HepG2 (cell line): ENCODE measurements at regions of chr6 and their contacts with region 1.

Region 1: DNA sequence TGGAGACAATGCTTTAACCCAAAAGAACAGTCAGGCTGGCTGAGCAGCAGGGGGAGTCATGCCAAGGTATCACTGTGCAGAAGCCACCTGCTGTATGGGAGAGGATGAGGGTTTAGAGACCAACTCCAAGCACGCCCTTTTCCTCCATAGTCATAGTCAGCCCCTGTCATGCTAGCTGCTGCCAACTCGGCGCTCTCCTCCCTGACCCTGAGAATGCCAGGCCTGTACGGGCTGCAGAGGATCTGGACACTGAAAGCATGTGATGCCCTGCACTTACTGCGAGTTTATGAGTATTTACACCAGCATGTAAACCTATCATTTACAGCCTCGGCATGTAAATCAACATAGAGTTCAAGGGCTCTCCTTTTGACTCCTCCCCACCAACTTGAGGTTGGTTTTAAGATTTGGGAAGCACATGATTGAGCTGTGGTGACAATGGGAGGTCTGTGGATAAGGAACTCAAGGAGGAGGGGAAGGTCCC is 11.7 kb upstream of the SCUBE3 start:
- DNase-seq: no peak
- ATAC-seq: peak; percentile 58
- H3K4me3 ChIP-seq: no peak overlapping the region
- H3K27ac ChIP-seq: no peak overlapping the region
- H3K4me1 ChIP-seq: peaks cover 43% of the 10 kb centered on the region
- H3K27me3 ChIP-seq: peaks cover 7 to 26% of the 10 kb centered on the region in 2 experiments; a peak in 4 of 5 replicates
- CTCF ChIP-seq: no peak
- EP300 ChIP-seq: no peak
- POLR2A ChIP-seq: no peak
- RAD21 ChIP-seq: no peak

Region 2: DNA sequence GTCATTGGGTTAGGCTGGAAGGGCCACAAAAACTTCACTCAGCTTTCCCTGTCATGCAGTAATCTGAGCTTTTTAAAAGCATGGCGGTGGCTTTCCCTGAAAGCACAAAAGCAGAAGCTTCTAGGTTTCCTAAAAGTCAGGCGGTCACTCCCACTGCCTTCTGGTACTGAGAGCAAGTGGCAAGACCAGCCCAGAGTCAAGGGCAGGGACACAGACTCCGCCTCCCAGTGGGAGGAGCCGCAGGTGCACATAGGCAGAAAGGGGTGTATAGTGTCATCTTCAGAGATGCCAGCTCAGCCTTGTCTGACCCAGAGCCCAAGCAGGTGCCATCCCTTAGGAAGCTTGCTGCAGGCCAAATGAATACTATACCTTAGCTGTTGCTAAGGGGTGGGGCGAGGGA is 754.2 kb before region 1 on chr6:
- CTCF ChIA-PET with region 1: no interaction called
- POLR2A ChIA-PET with region 1: no interaction called
- in situ Hi-C with region 1: no loop called
- intact Hi-C with region 1: no loop called
- DNase-seq: no peak
- ATAC-seq: peak; percentile 60
- H3K4me3 ChIP-seq: no peak overlapping the region
- H3K27ac ChIP-seq: no peak overlapping the region
- H3K4me1 ChIP-seq: no peaks in the 10 kb centered on the region
- H3K27me3 ChIP-seq: peaks cover 1 to 14% of the 10 kb centered on the region in 2 experiments; a peak in 2 of 5 replicates
- CTCF ChIP-seq: no peak
- EP300 ChIP-seq: no peak
- POLR2A ChIP-seq: no peak
- RAD21 ChIP-seq: no peak

Region 3: GRCh38 chr6:34986845-34987246 is 215.3 kb before region 1 on chr6:
- CTCF ChIA-PET with region 1: no interaction called
- POLR2A ChIA-PET with region 1: no interaction called
- in situ Hi-C with region 1: no loop called
- intact Hi-C with region 1: loop called (anchors 2 kb)
- DNase-seq: peak; percentile 71
- ATAC-seq: peak; percentile 76
- H3K4me3 ChIP-seq: no peak overlapping the region
- H3K27ac ChIP-seq: no peak overlapping the region
- H3K4me1 ChIP-seq: no peaks in the 10 kb centered on the region
- H3K27me3 ChIP-seq: no peaks in the 10 kb centered on the region
- CTCF ChIP-seq: peak; percentile 89
- EP300 ChIP-seq: no peak
- POLR2A ChIP-seq: no peak
- RAD21 ChIP-seq: peak; percentile 80

Region 4: DNA sequence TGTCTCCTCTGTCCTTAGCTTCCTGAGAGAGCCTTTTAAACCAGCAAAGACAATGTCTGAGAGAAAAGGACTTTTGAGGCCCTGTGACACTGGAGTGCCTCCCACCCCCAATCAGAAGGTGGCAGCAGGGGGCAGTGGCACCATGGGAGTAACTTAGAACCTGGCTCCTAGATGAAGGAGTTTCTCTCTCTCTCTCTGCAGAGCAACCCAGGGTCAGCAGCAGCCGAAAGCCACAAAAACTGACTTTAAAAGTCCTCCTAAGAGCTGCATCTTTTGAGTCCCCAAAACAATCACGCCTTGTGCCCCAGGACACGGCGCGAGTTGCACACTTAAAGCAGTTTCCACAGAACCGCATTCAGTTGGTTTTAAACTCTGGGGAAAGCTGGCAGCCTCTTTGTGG is 55.7 kb before region 1 on chr6:
- CTCF ChIA-PET with region 1: interaction called, 67 read pairs
- POLR2A ChIA-PET with region 1: interaction called, 4 read pairs
- in situ Hi-C with region 1: loop called (anchors 5 kb)
- intact Hi-C with region 1: loop called (anchors 1 kb)
- DNase-seq: peak; percentile 63
- ATAC-seq: peak; percentile 92
- H3K4me3 ChIP-seq: no peak overlapping the region
- H3K27ac ChIP-seq: no peak overlapping the region
- H3K4me1 ChIP-seq: peaks cover 19% of the 10 kb centered on the region
- H3K27me3 ChIP-seq: peaks cover 0 to 19% of the 10 kb centered on the region in 2 experiments; a peak in 3 of 5 replicates
- CTCF ChIP-seq: peak; percentile 93
- EP300 ChIP-seq: no peak
- POLR2A ChIP-seq: no peak
- RAD21 ChIP-seq: peak; percentile 92

Region 5: GRCh38 chr6:35185302-35185681 is 16.8 kb before region 1 on chr6:
- CTCF ChIA-PET with region 1: no interaction called
- POLR2A ChIA-PET with region 1: interaction called, 3 read pairs
- in situ Hi-C with region 1: no loop called
- intact Hi-C with region 1: loop called (anchors 2 kb)
- DNase-seq: peak; percentile 82
- ATAC-seq: peak; percentile 94
- H3K4me3 ChIP-seq: peak overlapping the region in 2 of 3 experiments; percentile 11 to 21; a peak in 1 of 6 replicates
- H3K27ac ChIP-seq: no peak overlapping the region
- H3K4me1 ChIP-seq: peaks cover 32% of the 10 kb centered on the region
- H3K27me3 ChIP-seq: peaks cover 2 to 7% of the 10 kb centered on the region in 2 experiments; a peak in 3 of 5 replicates
- CTCF ChIP-seq: no peak
- EP300 ChIP-seq: peak in 1 of 2 experiments; percentile 62; a peak in 1 of 4 replicates
- POLR2A ChIP-seq: no peak
- RAD21 ChIP-seq: no peak

Region 6: DNA sequence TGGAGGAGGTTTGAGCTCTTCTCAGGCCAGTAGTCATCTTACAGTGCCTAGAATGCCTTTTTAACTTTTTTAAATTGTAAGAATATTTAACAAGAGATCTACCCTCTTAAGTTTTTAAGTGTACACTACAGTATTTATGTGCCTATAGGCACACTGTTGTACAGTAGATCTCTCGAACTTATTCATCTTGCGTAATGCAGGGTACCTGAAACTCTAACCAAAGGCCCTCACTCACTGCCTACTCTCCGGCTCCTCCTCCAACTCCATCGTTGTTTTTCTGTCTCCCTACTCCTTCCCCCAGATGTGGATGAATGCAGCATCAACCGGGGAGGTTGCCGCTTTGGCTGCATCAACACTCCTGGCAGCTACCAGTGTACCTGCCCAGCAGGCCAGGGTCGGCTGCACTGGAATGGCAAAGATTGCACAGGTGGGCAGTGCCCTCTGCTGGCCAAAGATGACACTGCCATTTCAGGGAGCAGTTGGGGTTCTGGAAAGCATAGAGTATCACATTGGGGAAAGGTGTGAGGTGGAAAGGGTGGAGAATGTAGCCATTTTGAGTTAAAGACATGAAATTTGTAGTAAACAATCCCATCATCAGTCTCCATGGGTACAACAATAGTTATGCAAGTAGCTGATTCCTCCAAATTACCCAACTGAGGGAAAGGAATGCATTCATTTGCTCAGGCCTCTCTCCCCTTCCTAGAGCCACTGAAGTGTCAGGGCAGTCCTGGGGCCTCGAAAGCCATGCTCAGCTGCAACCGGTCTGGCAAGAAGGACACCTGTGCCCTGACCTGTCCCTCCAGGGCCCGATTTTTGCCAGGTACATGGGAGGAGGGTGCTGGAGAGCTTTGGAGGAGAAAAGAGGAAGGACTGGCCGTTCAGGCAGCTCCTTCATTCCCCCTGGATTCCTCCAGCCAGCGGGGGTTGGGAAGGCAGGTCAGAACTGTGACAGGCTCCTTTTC is 39.0 kb after region 1 on chr6:
- CTCF ChIA-PET with region 1: no interaction called
- POLR2A ChIA-PET with region 1: no interaction called
- in situ Hi-C with region 1: no loop called
- intact Hi-C with region 1: loop called (anchors 1 kb)
- DNase-seq: peak; percentile 59
- ATAC-seq: peak; percentile 93
- H3K4me3 ChIP-seq: no peak overlapping the region
- H3K27ac ChIP-seq: no peak overlapping the region
- H3K4me1 ChIP-seq: no peaks in the 10 kb centered on the region
- H3K27me3 ChIP-seq: no peaks in the 10 kb centered on the region
- CTCF ChIP-seq: peak; percentile 99
- EP300 ChIP-seq: no peak
- POLR2A ChIP-seq: no peak
- RAD21 ChIP-seq: peak; percentile 97